ENCODE measurements at regions of chr1 and their contacts with region 1.

Region 1: GRCh38 chr1:114979278-114979891 is 50.2 kb upstream of the TSHB start:
- DNase-seq: no peak
- ATAC-seq: peak; percentile 80
- H3K4me3 ChIP-seq: no peak overlapping the region
- H3K27ac ChIP-seq: no peak overlapping the region
- H3K4me1 ChIP-seq: no peaks in the 10 kb centered on the region
- H3K27me3 ChIP-seq: peaks cover 3% of the 10 kb centered on the region
- CTCF ChIP-seq: peak; percentile 90

Region 2: GRCh38 chr1:115088871-115089419 is 109.6 kb after region 1 on chr1:
- intact Hi-C with region 1: no loop called
- DNase-seq: no peak
- ATAC-seq: no peak
- H3K4me3 ChIP-seq: peak overlapping the region; percentile 64
- H3K27ac ChIP-seq: no peak overlapping the region
- H3K4me1 ChIP-seq: peaks cover 19% of the 10 kb centered on the region
- H3K27me3 ChIP-seq: no peaks in the 10 kb centered on the region
- CTCF ChIP-seq: no peak

Region 3: GRCh38 chr1:115112496-115113375 is 133.4 kb after region 1 on chr1:
- intact Hi-C with region 1: loop called (anchors 5 kb)
- DNase-seq: peak; percentile 68
- ATAC-seq: peak; percentile 65
- H3K4me3 ChIP-seq: no peak overlapping the region
- H3K27ac ChIP-seq: no peak overlapping the region
- H3K4me1 ChIP-seq: peaks cover 3% of the 10 kb centered on the region
- H3K27me3 ChIP-seq: no peaks in the 10 kb centered on the region
- CTCF ChIP-seq: peak; percentile 95

Measured in upper lobe of right lung (tissue), 1 donor.